Activated CD4-positive, alpha-beta T cell treated with anti-CD3 and anti-CD28 coated beads for 36 hours (primary cell): ENCODE measurements at regions of chr10 and their contacts with region 1.

Region 1: GRCh38 chr10:103244663-103245271 is 920 bp upstream of the RPEL1 start:
- DNase-seq: peak; percentile 80
- ATAC-seq: peak; percentile 81
- H3K4me3 Mint-ChIP-seq: no peak overlapping the region
- H3K27ac Mint-ChIP-seq: no peak overlapping the region
- H3K4me1 Mint-ChIP-seq: peaks cover 12% of the 10 kb centered on the region
- H3K27me3 Mint-ChIP-seq: peaks cover 2% of the 10 kb centered on the region

Region 2: GRCh38 chr10:103080891-103081581 is 163.7 kb before region 1 on chr10:
- CTCF ChIA-PET with region 1: interaction called, 9 read pairs
- POLR2A ChIA-PET with region 1: no interaction called
- intact Hi-C with region 1: loop called in 1 of 2 experiments (anchors 5 kb)
- DNase-seq: no peak
- ATAC-seq: peak; percentile 12
- H3K4me3 Mint-ChIP-seq: no peak overlapping the region
- H3K27ac Mint-ChIP-seq: no peak overlapping the region
- H3K4me1 Mint-ChIP-seq: no peaks in the 10 kb centered on the region
- H3K27me3 Mint-ChIP-seq: no peaks in the 10 kb centered on the region

Region 3: DNA sequence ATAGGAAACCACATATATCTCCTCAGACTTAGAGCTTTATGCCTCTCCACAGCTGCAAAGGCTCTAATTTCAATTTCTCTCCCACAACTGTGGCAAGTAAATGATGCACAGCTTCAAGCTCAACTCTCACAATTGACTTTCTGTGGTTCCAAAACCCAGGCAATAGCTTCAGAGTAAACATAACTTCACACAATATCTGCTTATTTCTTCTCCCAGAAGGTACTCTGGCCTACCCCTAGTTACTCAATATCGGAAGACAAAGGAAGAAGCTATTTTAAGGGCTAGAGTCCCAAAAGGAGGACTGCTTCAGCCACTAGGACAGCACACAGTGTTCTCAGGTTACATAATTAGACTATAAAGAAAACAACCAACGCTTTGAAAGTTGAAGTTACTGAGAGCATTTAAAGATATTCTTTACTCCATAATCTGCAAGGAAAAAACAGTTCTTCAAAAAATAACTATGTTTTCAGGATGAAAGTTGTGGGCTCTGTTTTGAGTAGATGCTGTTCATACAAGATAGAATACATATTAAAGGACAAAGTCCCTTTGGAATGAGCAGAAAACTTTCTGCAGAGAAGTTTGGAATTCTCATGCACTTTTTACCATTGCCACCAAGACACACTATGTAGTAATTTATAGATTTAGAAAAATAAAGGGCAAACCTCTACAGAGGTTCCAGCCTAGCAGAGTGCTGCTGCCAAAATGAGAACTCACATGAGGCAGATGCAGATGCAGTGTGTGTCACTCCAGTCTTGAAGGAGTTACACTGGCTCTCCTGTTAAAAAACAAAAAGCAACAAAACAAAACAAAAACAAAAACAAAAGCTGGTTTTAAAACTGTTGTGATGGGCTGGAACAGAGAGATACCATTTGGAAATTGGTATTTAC is 133.5 kb before region 1 on chr10:
- CTCF ChIA-PET with region 1: interaction called, 18 read pairs
- POLR2A ChIA-PET with region 1: no interaction called
- intact Hi-C with region 1: loop called in 1 of 2 experiments (anchors 5 kb)
- DNase-seq: no peak
- ATAC-seq: no peak
- H3K4me3 Mint-ChIP-seq: no peak overlapping the region
- H3K27ac Mint-ChIP-seq: peak overlapping the region; percentile 83
- H3K4me1 Mint-ChIP-seq: peaks cover 20% of the 10 kb centered on the region
- H3K27me3 Mint-ChIP-seq: no peaks in the 10 kb centered on the region

Region 4: DNA sequence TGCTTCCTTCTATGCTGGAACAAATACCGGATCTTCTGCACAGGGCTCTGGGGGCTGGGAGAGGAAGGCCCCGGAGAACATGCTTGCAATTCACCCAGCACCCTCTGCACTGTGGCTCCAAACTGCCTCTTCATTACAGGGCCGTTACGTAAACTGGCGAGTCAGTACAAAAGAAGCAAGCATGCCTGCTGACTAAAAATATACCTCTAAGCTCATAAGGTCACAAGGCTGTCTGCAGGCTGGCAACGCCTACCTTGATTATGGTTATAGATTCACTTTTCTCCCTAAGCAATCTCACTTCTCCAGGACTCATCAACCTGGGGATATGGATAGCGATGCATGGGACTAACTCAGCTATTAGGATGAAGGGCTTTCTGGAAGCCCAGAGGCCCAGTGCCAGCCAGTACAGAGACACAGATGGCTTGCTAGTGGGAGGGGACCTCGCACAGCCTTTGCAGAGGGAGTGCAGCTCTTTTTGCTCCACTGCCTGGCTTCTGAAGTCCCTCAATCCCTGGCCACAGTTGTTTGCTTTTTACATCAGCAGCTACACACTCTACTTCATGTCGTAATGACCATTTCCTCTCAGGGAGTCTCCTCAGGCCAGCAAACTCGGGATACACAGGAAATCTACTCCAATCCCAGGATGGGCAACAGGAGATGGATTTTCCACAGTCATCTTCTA is 514.5 kb after region 1 on chr10:
- CTCF ChIA-PET with region 1: no interaction called
- POLR2A ChIA-PET with region 1: no interaction called
- intact Hi-C with region 1: no loop called
- DNase-seq: peak; percentile 73
- ATAC-seq: peak; percentile 83
- H3K4me3 Mint-ChIP-seq: peak overlapping the region; percentile 11
- H3K27ac Mint-ChIP-seq: peak overlapping the region; percentile 51
- H3K4me1 Mint-ChIP-seq: peaks cover 47% of the 10 kb centered on the region
- H3K27me3 Mint-ChIP-seq: no peaks in the 10 kb centered on the region